Activated naive CD4-positive, alpha-beta T cell treated with anti-CD3 and anti-CD28 coated beads for 36 hours (primary cell): ENCODE measurements at regions of chr7 and their contacts with region 1.

Region 1: GRCh38 chr7:139680676-139681462 is 96.9 kb downstream of the HIPK2 start:
- DNase-seq: peak; percentile 91
- H3K4me3 Mint-ChIP-seq: no peak overlapping the region
- H3K27ac Mint-ChIP-seq: peak overlapping the region; percentile 88
- H3K4me1 Mint-ChIP-seq: peaks cover 45% of the 10 kb centered on the region
- H3K27me3 Mint-ChIP-seq: no peaks in the 10 kb centered on the region

Region 2: DNA sequence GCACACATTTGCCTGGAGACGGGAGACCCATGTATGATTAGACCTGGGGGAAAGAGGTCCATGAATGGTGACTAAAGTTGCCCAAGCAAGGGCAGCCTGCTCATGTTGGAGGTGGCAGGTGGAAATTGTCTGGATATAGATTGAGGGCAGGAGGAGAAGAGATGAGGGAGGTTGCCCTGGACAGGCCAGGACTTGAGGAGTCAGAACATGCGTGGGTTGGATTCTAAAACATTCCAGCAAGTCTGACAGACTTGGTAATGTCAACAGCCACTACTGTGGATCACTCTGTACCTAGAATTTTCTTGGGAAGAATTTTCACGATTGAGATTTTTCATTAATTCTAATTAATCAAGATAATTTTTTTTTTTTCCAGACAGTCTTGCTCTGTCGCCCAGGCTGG is 960.6 kb before region 1 on chr7:
- CTCF ChIA-PET with region 1: no interaction called
- intact Hi-C with region 1: no loop called
- DNase-seq: no peak
- H3K4me3 Mint-ChIP-seq: no peak overlapping the region
- H3K27ac Mint-ChIP-seq: no peak overlapping the region
- H3K4me1 Mint-ChIP-seq: peaks cover 16% of the 10 kb centered on the region
- H3K27me3 Mint-ChIP-seq: no peaks in the 10 kb centered on the region

Region 3: DNA sequence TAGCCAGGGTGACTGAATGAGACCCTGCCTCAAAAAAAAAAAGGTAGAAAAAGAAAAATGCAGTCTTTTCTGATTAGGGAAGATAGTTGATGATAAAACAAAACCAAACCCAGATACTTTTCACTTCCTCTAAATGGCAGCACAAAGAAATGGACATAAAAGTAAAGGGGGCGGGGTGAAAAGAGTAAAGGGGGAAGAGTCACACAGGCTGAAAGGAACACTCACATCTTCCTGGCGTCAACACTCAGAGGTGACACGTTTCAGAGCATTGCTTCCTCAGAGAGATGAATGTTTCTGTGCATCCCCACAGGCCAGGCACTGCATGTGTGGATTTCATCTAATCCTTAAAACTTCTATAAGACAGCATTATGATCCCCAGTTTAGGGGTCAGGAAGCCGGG is 15.7 kb after region 1 on chr7:
- CTCF ChIA-PET with region 1: no interaction called
- intact Hi-C with region 1: loop called (anchors 1 kb)
- DNase-seq: peak; percentile 78
- H3K4me3 Mint-ChIP-seq: no peak overlapping the region
- H3K27ac Mint-ChIP-seq: peak overlapping the region; percentile 81
- H3K4me1 Mint-ChIP-seq: peaks cover 30% of the 10 kb centered on the region
- H3K27me3 Mint-ChIP-seq: no peaks in the 10 kb centered on the region

Region 4: DNA sequence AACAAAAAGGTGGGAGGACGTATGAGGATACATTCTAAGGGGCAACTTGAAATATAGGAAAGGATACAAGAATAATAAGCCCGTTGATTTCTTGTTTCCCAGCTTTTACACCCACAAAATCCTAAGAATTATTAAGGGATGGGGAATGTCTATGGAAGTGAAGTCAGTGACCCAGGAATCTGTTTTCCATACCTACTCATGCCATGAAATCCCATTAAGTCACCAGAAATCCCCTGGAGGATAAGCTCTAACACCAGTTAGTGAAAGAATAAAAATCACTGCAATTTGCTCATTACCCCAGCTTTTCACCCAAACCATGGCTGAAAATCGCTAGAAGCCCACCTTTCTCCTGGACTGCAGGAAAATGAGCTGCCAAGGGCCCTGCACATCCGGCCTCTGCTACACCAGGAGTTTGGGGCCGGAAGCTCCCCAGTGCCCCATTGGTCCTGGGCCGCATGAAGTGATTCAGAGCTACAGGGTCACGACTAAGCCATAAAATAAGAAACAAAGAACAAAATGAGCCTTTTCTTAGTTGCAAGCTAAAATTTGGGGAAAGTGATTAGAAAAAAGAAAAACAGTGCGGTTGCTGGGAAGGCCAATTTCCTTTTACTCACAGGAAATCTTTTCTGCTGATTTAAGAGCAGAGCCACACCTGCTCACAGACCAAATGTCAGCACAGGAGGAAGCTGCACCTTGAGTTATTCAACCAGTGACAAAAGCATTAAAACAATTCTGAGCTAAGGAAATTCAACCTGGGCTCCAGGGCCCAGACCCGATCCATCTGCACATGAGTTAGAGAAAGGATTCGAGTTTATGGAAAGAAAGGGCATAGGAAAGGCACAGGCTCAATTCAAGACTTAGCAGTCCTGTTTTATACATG is 56.6 kb after region 1 on chr7:
- CTCF ChIA-PET with region 1: interaction called, 3 read pairs
- intact Hi-C with region 1: loop called (anchors 1 kb)
- DNase-seq: peak; percentile 74
- H3K4me3 Mint-ChIP-seq: peak overlapping the region; percentile 38
- H3K27ac Mint-ChIP-seq: peak overlapping the region; percentile 84
- H3K4me1 Mint-ChIP-seq: peaks cover 55% of the 10 kb centered on the region
- H3K27me3 Mint-ChIP-seq: no peaks in the 10 kb centered on the region

Region 5: DNA sequence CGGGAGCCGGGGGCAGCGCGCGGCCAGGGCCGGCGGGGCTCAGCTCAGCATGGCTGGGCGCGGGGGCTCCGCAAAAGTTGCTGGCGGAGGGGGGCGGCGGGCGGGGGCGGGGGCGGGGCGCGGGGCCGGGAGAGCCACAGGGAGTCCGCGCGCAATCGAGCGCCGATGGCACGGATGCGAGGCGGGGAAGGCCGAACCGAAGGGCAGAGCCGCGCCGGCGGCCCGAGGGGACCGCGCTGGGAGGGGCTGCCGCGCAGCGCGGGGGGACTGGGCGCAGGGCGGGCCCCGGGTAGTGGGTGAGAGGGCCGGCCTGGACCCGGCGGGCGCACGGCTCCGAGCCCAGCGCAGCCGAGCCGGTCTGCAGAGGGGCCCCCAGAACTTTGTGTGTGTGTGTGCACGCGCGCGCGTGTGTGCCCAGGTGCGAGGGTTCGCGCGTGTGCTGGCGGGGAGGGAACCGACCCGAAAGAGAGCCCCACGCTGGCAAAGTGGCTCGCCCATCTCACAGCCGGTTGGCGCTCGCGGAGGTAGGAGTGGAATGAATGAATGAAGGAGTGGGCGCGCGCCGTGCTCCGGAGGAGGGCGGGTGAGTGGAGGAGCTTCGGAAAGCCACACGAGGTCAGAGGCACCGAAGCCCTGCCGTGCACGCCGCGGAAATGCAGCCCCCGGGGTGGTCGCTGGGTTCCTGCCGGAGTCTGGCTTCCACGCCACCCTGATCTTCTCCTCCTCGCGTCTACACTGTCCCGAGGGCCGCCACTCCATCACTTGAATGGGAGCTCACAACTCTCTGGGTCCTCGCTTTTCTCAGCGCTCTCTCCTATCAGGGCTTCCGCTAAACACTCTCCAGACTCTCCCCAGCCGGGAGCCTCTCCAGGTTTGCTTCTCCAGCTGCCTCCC is 97.3 kb after region 1 on chr7 and contains the start of gene HIPK2:
- CTCF ChIA-PET with region 1: no interaction called
- intact Hi-C with region 1: loop called (anchors 1 kb)
- DNase-seq: peak; percentile 68
- H3K4me3 Mint-ChIP-seq: peak within 1 kb of the TSS; percentile 96
- H3K27ac Mint-ChIP-seq: peak within 1 kb of the TSS; percentile 84
- H3K4me1 Mint-ChIP-seq: peaks cover 36% of the 10 kb centered on the region
- H3K27me3 Mint-ChIP-seq: peaks cover 14% of the 10 kb centered on the region
- total RNA-seq, gene HIPK2: 16.8 to 17.3 TPM

Region 6: DNA sequence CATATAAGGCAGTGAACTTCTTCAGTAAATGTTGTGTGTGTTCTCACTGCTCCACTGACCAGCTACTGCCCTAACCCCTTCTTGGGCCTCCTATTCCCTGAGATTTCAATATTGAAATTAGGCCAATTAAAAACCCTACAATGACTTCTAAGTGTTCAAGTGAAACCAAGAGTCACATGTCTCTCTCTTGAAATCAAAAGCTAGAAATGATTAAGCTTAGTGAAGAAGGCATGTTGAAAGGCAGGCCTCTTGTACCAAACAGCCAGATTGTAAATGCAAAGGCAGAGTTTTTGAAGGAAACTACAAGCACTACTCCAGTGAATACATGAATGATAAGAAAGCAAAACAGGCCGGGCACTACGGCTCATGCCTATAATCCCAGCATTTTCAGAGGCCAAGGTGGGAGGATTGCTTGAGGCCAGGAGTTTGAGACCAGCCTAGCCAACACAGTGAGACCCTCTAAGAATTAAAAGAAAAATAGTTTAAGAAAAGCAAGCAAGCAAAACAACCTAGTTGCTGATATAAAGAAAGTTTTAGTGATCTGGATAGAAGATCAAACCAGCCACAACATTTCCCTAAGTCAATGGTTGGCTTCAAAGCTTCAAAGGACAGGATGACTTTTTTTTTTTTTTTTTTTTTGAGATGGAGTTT is 1221.6 kb after region 1 on chr7:
- CTCF ChIA-PET with region 1: no interaction called
- intact Hi-C with region 1: loop called (anchors 10 kb)
- DNase-seq: no peak
- H3K4me3 Mint-ChIP-seq: peak overlapping the region; percentile 33
- H3K27ac Mint-ChIP-seq: peak overlapping the region; percentile 88
- H3K4me1 Mint-ChIP-seq: peaks cover 66% of the 10 kb centered on the region
- H3K27me3 Mint-ChIP-seq: no peaks in the 10 kb centered on the region